H1 (cell line): ENCODE measurements at regions of chr12 and their contacts with region 1.

Region 1: DNA sequence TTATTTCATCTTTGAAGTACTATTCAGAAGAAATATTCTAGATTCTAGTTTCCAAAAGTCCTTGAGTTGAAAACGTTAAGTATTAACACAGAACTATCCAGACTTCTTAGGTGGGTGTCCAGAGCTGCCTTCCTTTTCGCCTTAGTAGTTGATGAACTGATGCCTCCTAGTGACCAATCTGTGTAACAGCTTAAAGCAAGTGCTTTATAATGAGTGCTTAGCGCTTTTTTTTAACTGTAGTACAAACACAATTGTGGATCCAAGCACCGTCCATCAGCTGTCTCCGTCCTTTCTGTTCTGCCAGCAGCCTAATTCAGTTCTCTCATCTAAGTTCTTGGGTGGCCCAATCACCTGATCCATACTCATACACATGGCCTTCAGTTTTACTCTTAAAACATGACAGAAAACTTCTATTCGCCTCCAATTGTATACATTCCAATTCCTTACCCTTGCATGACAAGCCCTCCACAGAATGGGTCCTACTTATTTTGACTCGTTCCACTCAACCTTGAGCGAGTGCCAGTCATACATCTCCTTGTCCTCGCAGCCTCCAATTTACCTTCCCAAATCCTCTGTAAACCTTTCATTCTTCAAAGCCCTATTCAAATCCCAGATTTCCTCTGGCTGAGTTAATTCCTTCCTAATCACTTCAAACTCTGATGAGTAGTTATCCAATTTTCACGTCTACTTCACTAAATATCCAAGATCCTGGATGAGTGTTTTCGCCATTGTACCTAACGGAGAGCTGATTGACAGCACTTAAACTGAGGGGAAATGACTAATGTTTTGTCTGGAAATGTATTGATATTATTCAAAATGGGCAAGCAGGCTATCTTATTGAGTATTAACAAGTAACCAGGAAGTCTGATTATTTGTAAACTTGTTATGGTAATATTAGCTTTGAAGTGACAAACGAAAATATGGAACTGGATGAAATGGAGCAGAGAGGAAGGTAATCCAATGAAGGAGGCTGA is 5.8 kb upstream of the PHLDA1 start:
- DNase-seq: no peak
- H3K4me3 ChIP-seq: no peak overlapping the region
- H3K27ac ChIP-seq: no peak overlapping the region
- H3K4me1 ChIP-seq: peaks cover 2 to 4% (median 4%) of the 10 kb centered on the region in 4 experiments; a peak in 6 of 7 replicates
- H3K27me3 ChIP-seq: no peaks in the 10 kb centered on the region
- CTCF ChIP-seq: peak in 2 of 3 experiments; percentile 81 to 88; a peak in 3 of 4 replicates
- EP300 ChIP-seq: no peak
- POLR2A ChIP-seq: peak; percentile 23 to 55; a peak in 2 of 3 replicates
- RAD21 ChIP-seq: peak; percentile 94 to 98

Region 2: DNA sequence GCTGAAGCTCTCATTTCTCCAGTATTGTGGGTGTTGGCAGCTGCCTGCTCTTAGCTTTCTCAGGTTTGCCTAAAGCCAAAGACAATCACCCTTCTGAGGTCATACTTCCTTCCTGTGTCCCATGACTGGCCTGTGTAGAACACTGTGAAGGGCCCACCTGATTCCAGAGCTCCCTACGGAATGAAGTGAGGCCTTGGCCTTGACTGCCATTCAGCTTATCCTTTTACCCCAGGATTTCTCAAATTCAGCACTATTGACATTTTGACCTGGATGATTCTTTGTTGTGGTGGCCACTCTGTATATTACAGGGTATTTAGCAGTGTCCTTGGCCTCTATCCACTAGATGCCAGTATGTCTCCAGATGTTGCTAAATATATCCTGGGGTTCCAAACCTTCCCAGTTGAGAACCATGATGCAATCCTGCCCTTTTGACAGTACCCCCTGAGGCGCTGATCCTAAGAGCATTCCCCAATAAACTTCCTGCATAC is 413.7 kb before region 1 on chr12:
- CTCF ChIA-PET with region 1: interaction called, 32 read pairs
- POLR2A ChIA-PET with region 1: interaction called, 4 read pairs
- DNase-seq: no peak
- H3K4me3 ChIP-seq: no peak overlapping the region
- H3K27ac ChIP-seq: no peak overlapping the region
- H3K4me1 ChIP-seq: peaks cover 0 to 4% (median 0%) of the 10 kb centered on the region in 4 experiments; a peak in 1 of 7 replicates
- H3K27me3 ChIP-seq: no peaks in the 10 kb centered on the region
- CTCF ChIP-seq: peak in 2 of 3 experiments; percentile 67 to 85; a peak in 3 of 4 replicates
- EP300 ChIP-seq: no peak
- POLR2A ChIP-seq: no peak
- RAD21 ChIP-seq: peak; percentile 87 to 92

Region 3: GRCh38 chr12:76049575-76050251 is 12.3 kb after region 1 on chr12:
- CTCF ChIA-PET with region 1: interaction called, 4 read pairs
- POLR2A ChIA-PET with region 1: interaction called, 18 read pairs
- DNase-seq: no peak
- H3K4me3 ChIP-seq: no peak overlapping the region
- H3K27ac ChIP-seq: no peak overlapping the region
- H3K4me1 ChIP-seq: no peaks in the 10 kb centered on the region
- H3K27me3 ChIP-seq: no peaks in the 10 kb centered on the region
- CTCF ChIP-seq: no peak
- EP300 ChIP-seq: no peak
- POLR2A ChIP-seq: no peak
- RAD21 ChIP-seq: no peak

Region 4: DNA sequence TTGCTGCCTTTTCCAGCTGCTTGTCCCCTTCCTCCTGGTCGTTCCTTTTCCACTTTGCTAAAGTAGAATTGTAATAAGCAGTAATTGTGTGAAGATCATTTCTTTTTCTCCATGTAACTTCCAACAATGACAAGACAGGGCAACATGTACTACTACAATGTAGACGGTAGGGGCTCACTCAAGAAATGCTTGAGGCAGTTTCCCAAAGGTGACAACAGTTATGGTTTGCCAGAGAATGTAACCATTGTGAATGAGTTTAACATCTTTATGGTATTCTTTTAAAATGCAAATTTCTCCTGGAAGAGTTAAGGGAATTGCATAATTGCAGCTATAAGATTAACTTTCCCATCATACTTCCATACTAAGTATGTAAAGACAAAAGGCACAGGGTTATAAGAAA is 18.0 kb after region 1 on chr12:
- CTCF ChIA-PET with region 1: interaction called, 3 read pairs
- POLR2A ChIA-PET with region 1: interaction called, 18 read pairs
- DNase-seq: no peak
- H3K4me3 ChIP-seq: 0 out of 8 replicates have a peak overlapping the region, but pooled peaks of 1 of the 4 experiments have one; percentile 3
- H3K27ac ChIP-seq: no peak overlapping the region
- H3K4me1 ChIP-seq: peaks cover 0 to 10% (median 7%) of the 10 kb centered on the region in 4 experiments; a peak in 4 of 7 replicates
- H3K27me3 ChIP-seq: no peaks in the 10 kb centered on the region
- CTCF ChIP-seq: peak in 2 of 3 experiments; percentile 27 to 48; a peak in 2 of 4 replicates
- EP300 ChIP-seq: no peak
- POLR2A ChIP-seq: no peak
- RAD21 ChIP-seq: peak; percentile 35 to 46

Region 5: GRCh38 chr12:76144245-76144549 is 106.8 kb after region 1 on chr12:
- CTCF ChIA-PET with region 1: no interaction called
- POLR2A ChIA-PET with region 1: no interaction called
- DNase-seq: no peak
- H3K4me3 ChIP-seq: no peak overlapping the region
- H3K27ac ChIP-seq: no peak overlapping the region
- H3K4me1 ChIP-seq: no peaks in the 10 kb centered on the region
- H3K27me3 ChIP-seq: no peaks in the 10 kb centered on the region
- CTCF ChIP-seq: no peak
- EP300 ChIP-seq: no peak
- POLR2A ChIP-seq: no peak
- RAD21 ChIP-seq: no peak